AG04450 (cell line): ENCODE measurements at regions of chr6 and their contacts with region 1.

Region 1: GRCh38 chr6:155013457-155013876 is 18.4 kb downstream of the TIAM2 start:
- DNase-seq: no peak
- H3K4me3 ChIP-seq: no peak overlapping the region
- H3K27ac ChIP-seq: no peak overlapping the region
- H3K27me3 ChIP-seq: no peaks in the 10 kb centered on the region
- CTCF ChIP-seq: no peak

Region 2: GRCh38 chr6:155275808-155276480 is 262.5 kb after region 1 on chr6:
- CTCF ChIA-PET with region 1: interaction called, 12 read pairs
- POLR2A ChIA-PET with region 1: no interaction called
- DNase-seq: no peak
- H3K4me3 ChIP-seq: no peak overlapping the region
- H3K27ac ChIP-seq: no peak overlapping the region
- H3K27me3 ChIP-seq: no peaks in the 10 kb centered on the region
- CTCF ChIP-seq: no peak

Region 3: GRCh38 chr6:155787168-155787567 is 773.7 kb after region 1 on chr6:
- CTCF ChIA-PET with region 1: no interaction called
- POLR2A ChIA-PET with region 1: no interaction called
- DNase-seq: no peak
- H3K4me3 ChIP-seq: no peak overlapping the region
- H3K27ac ChIP-seq: no peak overlapping the region
- H3K27me3 ChIP-seq: no peaks in the 10 kb centered on the region
- CTCF ChIP-seq: no peak